Posterior cingulate gyrus (tissue), 11 donors: ENCODE measurements at regions of chr7 and their contacts with region 1.

Region 1: GRCh38 chr7:29255906-29256782 is 61.6 kb downstream of the CHN2 start:
- DNase-seq: no peak

Region 2: GRCh38 chr7:29177963-29178600 is 78.1 kb before region 1 on chr7:
- intact Hi-C with region 1: loop called (anchors 2 kb)
- DNase-seq: peak in 6 of 10 donors; percentile 16 to 90 (median 31)